ENCODE measurements at regions of chr2 and their contacts with region 1.

Region 1: GRCh38 chr2:38201784-38202183 is 125.8 kb upstream of the CYP1B1 start:
- DNase-seq: no peak
- ATAC-seq: no peak

Region 2: GRCh38 chr2:36762764-36763490 is 1438.9 kb before region 1 on chr2:
- intact Hi-C with region 1: loop called (anchors 10 kb)
- DNase-seq: no peak
- ATAC-seq: peak; percentile 42

Region 3: GRCh38 chr2:37156071-37156856 is 1045.5 kb before region 1 on chr2:
- intact Hi-C with region 1: no loop called
- DNase-seq: peak; percentile 66
- ATAC-seq: peak; percentile 69

Region 4: DNA sequence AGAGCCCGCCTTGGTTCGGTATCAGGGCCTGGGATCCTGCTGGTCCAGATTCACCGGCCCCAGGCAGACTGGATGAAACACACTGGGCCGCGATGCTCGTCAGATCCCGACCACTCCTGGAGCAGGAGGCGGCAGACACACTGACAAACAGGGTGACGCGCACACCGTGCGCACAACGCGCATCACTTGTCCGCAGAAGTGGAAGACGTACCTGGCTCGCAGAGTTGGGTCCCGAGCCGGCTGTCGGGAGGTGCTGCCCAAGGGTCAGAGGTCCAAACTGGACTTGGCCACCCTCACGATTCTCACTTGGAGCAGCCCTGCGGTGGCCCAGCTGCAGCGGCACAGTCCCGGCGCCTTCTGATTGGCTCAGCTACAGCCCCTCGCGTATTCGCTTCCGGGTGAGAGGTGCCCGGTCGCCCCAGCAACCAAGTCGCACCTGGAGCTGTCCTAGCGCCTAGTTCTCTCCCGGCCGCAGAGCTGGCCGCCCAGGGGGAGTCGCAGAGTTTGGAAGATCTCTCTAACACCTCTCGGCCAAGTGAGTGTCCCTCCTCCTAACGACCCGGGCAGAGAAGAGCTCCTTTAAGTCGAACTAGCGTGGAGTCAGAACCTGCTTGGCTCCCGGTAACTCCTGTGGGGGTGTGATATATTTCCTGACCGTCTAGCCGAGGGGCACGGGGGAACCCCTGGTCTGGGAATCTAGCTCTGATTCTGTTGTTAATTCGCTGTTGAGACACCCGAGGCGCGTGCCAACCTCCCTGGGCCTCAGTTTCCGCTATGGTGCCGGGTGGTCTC is 674.0 kb after region 1 on chr2 and contains the starts of genes DHX57 and MORN2:
- intact Hi-C with region 1: no loop called
- DNase-seq: peak; percentile 92
- ATAC-seq: peak; percentile 99
- total RNA-seq, gene DHX57: 19.8 TPM
- total RNA-seq, gene MORN2: 13.0 TPM

Measured in sciatic nerve (tissue), 2 donors.